ENCODE measurements at regions of chr2 and their contacts with region 1.

Region 1: DNA sequence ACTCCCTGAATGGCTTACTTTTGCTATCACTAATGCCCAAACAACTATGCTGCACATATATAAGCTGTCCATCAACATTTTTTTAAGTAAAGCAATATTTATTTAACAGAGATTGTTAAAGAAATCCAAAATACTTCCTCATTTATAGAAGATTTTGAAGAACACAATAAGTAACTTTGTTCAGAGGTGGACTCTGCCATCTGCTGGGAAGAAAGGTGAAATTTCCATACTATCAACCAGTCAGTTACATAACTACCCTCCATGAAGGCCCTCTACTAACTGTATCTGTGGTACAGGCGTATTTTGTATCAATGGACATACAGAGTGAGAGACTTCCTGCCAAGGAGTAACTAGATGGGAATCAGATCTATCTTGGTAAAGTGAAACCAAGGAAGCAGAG is 106.0 kb downstream of the DTNB start:
- DNase-seq: peak; percentile 67
- ATAC-seq: peak; percentile 85
- H3K4me3 ChIP-seq: no peak overlapping the region
- H3K27ac ChIP-seq: peak overlapping the region; percentile 75
- H3K4me1 ChIP-seq: peaks cover 23% of the 10 kb centered on the region
- H3K27me3 ChIP-seq: no peaks in the 10 kb centered on the region
- CTCF ChIP-seq: peak; percentile 47 to 68 (median 60)
- EP300 ChIP-seq: no peak
- POLR2A ChIP-seq: no peak
- RAD21 ChIP-seq: peak; percentile 78

Region 2: DNA sequence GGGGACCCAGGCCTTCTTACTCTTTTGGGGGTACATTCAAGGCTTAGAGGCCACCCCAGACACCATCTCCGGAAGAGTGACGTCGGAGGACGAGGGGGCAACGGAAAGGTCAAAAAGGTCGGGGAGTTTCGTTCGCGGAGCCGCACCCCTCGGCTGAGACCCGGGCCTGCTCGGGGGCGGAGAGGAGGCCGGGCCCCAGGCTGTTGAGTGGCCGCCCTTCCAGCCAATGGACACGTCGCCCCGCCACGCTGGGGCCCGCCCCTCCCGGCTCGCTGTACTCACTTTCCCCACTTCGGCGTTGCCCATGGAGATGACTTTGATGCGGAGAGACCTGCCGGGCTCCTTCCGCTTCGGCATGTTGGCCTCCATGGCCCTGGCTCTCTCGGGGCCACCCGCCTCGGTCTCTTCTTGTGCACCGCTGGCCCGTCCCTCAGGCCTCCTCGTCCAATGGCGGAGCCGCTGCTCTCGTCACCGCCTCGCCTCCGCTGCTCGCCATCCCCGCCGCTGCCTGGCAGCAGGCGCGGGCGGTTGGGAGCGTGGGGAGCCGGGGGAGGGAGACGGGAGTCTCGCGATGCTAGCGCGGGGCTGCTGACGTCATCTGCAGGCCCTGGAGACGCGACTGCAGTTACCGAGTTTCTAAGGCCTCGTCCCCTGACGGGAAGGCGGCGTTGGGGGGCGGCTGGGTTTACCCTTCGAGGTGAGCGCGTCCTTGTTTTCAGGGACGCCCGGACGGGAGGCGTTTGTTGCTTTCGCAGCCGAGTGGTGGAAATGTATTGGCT is 595.7 kb before region 1 on chr2 and contains the start of gene DNAJC27:
- CTCF ChIA-PET with region 1: interaction called, 5 read pairs
- POLR2A ChIA-PET with region 1: no interaction called
- RAD21 ChIA-PET with region 1: interaction called, 10 read pairs
- SMC1A ChIA-PET with region 1: interaction called, 5 read pairs
- in situ Hi-C with region 1: no loop called
- intact Hi-C with region 1: loop called (anchors 10 kb)
- DNase-seq: peak; percentile 93
- ATAC-seq: peak; percentile 97
- H3K4me3 ChIP-seq: peak within 1 kb of the TSS; percentile 78
- H3K27ac ChIP-seq: peak within 1 kb of the TSS; percentile 95
- H3K4me1 ChIP-seq: no peaks in the 10 kb centered on the region
- H3K27me3 ChIP-seq: no peaks in the 10 kb centered on the region
- CTCF ChIP-seq: no peak
- EP300 ChIP-seq: no peak
- POLR2A ChIP-seq: peak; percentile 83
- RAD21 ChIP-seq: no peak
- polyA plus RNA-seq, gene DNAJC27: 0.95 to 1.3 TPM

Region 3: GRCh38 chr2:25228848-25229278 is 338.5 kb before region 1 on chr2:
- CTCF ChIA-PET with region 1: interaction called, 7 read pairs
- POLR2A ChIA-PET with region 1: no interaction called
- RAD21 ChIA-PET with region 1: no interaction called
- SMC1A ChIA-PET with region 1: interaction called, 10 read pairs
- in situ Hi-C with region 1: no loop called
- intact Hi-C with region 1: no loop called
- DNase-seq: no peak
- ATAC-seq: peak; percentile 64
- H3K4me3 ChIP-seq: no peak overlapping the region
- H3K27ac ChIP-seq: no peak overlapping the region
- H3K4me1 ChIP-seq: peaks cover 29% of the 10 kb centered on the region
- H3K27me3 ChIP-seq: no peaks in the 10 kb centered on the region
- CTCF ChIP-seq: peak; percentile 60 to 82 (median 63)
- EP300 ChIP-seq: no peak
- POLR2A ChIP-seq: no peak
- RAD21 ChIP-seq: peak; percentile 55

Region 4: DNA sequence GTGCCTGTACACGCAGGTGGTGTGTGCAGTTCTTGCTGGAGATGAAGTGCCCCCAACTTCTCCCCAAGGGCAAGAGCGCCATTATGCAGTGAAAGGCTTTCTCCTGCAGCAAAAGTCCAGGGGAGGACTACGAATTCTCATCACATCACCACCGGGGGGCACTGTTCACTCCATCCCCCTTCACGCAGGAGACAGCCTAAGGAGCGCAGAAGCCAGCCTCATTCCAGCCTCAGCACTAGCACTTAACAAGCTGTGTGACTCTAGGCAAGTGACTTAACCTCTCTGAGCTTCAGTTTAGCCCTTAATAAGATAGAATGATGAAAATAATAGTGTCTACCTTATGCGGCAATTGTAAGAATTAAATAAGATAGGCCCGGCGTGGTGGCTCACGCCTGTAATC is 258.0 kb before region 1 on chr2:
- CTCF ChIA-PET with region 1: interaction called, 7 read pairs
- POLR2A ChIA-PET with region 1: no interaction called
- RAD21 ChIA-PET with region 1: interaction called, 10 read pairs
- SMC1A ChIA-PET with region 1: interaction called, 17 read pairs
- in situ Hi-C with region 1: no loop called
- intact Hi-C with region 1: loop called (anchors 5 kb)
- DNase-seq: no peak
- ATAC-seq: peak; percentile 72
- H3K4me3 ChIP-seq: no peak overlapping the region
- H3K27ac ChIP-seq: no peak overlapping the region
- H3K4me1 ChIP-seq: peaks cover 8% of the 10 kb centered on the region
- H3K27me3 ChIP-seq: no peaks in the 10 kb centered on the region
- CTCF ChIP-seq: peak; percentile 49 to 63 (median 52)
- EP300 ChIP-seq: no peak
- POLR2A ChIP-seq: no peak
- RAD21 ChIP-seq: peak; percentile 59

Region 5: GRCh38 chr2:25376750-25377621 is 190.4 kb before region 1 on chr2:
- CTCF ChIA-PET with region 1: interaction called, 17 read pairs
- POLR2A ChIA-PET with region 1: interaction called, 6 read pairs
- RAD21 ChIA-PET with region 1: interaction called, 7 read pairs
- SMC1A ChIA-PET with region 1: interaction called, 23 read pairs
- in situ Hi-C with region 1: no loop called
- intact Hi-C with region 1: no loop called
- DNase-seq: peak; percentile 91
- ATAC-seq: peak; percentile 97
- H3K4me3 ChIP-seq: no peak overlapping the region
- H3K27ac ChIP-seq: peak overlapping the region; percentile 80
- H3K4me1 ChIP-seq: peaks cover 39% of the 10 kb centered on the region
- H3K27me3 ChIP-seq: no peaks in the 10 kb centered on the region
- CTCF ChIP-seq: peak; percentile 75 to 96 (median 92); a peak in 5 of 6 replicates
- EP300 ChIP-seq: peak; percentile 86 to 94
- POLR2A ChIP-seq: peak; percentile 58; the same call in 1 of the 2 replicates
- RAD21 ChIP-seq: peak; percentile 76

Region 6: DNA sequence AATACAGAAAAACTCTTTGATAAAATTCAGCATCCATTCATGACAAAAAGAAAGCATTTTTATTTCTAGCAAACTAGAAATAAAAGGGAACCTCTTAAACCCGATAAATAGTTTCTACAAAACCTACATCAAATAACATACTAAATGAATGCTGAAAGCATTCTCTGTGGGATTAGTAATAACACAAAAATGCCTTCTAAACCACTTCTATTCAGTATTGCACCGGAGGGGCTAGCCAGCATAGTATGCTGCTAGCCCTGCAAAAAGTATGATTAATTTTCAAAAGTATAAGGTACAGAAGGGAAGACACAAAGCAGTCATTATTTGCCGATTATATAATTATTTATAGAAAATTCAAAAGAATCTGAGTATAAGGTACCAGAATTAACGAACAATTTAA is 39.2 kb before region 1 on chr2:
- CTCF ChIA-PET with region 1: interaction called, 28 read pairs
- POLR2A ChIA-PET with region 1: interaction called, 8 read pairs
- RAD21 ChIA-PET with region 1: interaction called, 35 read pairs
- SMC1A ChIA-PET with region 1: interaction called, 33 read pairs
- in situ Hi-C with region 1: no loop called
- intact Hi-C with region 1: loop called (anchors 2 kb)
- DNase-seq: no peak
- ATAC-seq: no peak
- H3K4me3 ChIP-seq: no peak overlapping the region
- H3K27ac ChIP-seq: no peak overlapping the region
- H3K4me1 ChIP-seq: no peaks in the 10 kb centered on the region
- H3K27me3 ChIP-seq: no peaks in the 10 kb centered on the region
- CTCF ChIP-seq: no peak
- EP300 ChIP-seq: no peak
- POLR2A ChIP-seq: no peak
- RAD21 ChIP-seq: no peak

Region 7: GRCh38 chr2:25606892-25607291 is 39.5 kb after region 1 on chr2:
- CTCF ChIA-PET with region 1: interaction called, 10 read pairs
- POLR2A ChIA-PET with region 1: interaction called, 9 read pairs
- RAD21 ChIA-PET with region 1: interaction called, 3 read pairs
- SMC1A ChIA-PET with region 1: interaction called, 6 read pairs
- in situ Hi-C with region 1: no loop called
- intact Hi-C with region 1: no loop called
- DNase-seq: no peak
- ATAC-seq: 0 out of 3 replicates have a peak, but pooled peaks have one; percentile 29
- H3K4me3 ChIP-seq: no peak overlapping the region
- H3K27ac ChIP-seq: no peak overlapping the region
- H3K4me1 ChIP-seq: peaks cover 8% of the 10 kb centered on the region
- H3K27me3 ChIP-seq: no peaks in the 10 kb centered on the region
- CTCF ChIP-seq: peak; percentile 44 to 74 (median 51)
- EP300 ChIP-seq: no peak
- POLR2A ChIP-seq: no peak
- RAD21 ChIP-seq: peak; percentile 83

Measured in GM12878 (cell line).